GM10248 (cell line): ENCODE measurements at regions of chr15 and their contacts with region 1.

Region 1: DNA sequence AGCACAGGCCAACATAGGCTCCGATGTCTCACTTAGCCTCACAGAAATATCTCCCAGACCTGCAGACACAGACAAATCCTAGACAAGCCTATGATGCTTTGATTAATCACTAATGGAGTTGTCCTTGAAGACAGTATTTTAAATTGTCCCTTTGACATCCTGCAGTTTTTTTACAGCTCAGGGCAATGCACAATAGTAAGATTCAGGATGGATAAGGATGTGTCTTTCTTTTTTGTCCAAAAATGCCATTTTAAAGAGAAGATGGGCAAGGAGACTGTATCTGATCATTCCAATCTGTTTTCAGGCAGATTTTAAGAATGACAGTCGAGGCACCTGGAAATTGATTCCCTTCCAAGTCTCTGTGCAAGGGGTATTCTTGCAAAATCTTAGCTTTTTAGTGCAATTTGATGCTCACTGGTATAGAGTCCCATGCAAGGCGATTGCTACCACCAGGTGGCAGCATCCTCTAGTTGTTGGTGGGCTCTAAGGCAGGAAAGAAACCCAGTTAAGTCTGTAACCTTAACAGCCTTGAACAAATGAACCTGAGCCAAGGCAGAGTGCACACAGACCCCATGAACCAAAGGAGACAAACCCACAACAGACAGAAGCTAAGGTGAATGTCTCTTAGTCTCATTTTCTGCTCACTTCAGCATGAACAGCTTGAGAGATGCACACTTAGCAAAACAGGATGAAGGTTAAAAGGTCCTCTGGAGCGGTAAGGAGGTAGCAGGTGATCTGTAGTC is 51.2 kb upstream of the MINAR1 start:
- DNase-seq: peak; percentile 72
- CTCF ChIP-seq: peak; percentile 86

Region 2: DNA sequence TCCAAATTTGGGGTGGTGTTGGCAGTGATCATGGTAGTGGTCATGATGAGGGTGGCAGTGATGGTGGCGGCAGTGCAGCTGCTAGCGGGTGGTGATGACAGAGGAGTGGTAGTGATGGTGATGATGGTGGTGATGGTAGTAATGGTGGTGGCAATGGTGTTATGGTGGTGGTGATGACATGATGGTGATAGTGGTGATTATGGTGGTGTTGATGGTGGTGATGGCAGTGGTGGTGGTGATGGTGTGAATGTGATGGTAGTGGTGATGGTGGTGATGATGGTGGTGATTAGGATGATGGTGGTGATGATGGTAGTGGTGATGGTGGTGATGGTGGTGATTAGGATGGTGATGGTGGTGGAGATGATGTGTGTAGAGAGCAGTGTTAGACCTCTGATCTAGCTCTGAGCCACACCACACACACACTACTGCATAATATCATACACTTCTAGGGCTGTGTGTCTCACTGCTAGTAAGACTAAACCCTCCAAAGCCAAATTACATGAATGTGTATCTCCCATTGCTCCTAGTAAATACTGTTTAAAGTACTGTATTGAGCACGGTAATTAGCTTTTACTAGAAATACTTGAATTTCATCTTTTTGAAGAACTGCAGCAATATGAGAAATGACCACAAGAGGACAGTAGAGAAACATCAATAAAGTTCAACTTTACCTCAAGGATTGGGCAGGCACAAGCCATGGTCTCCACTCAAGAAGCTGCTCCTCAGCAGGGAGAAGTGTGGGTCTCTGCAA is 41.2 kb before region 1 on chr15:
- CTCF ChIA-PET with region 1: interaction called, 22 read pairs
- POLR2A ChIA-PET with region 1: no interaction called
- DNase-seq: peak; percentile 40
- CTCF ChIP-seq: peak; percentile 45

Region 3: DNA sequence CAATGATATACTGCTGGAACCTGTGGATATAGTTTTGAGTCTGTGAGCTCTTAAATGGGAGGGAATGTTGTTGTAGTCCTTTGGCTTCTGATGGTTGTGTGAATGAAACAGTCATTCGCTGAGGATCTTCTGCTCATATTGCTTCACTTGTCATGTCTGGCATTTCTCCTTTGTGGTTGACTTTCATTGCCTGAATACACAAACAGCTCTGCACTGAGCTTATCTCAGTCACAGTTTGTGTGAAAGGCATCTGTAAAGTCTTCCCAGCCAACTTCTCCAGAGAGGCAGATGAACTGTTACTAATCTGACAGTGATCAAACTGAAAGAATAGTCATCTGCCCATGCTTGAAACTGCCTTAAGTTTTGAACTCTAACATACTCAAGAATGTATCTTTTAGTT is 10.2 kb before region 1 on chr15:
- CTCF ChIA-PET with region 1: interaction called, 78 read pairs
- POLR2A ChIA-PET with region 1: no interaction called
- DNase-seq: no peak
- CTCF ChIP-seq: no peak

Region 4: GRCh38 chr15:79403501-79403900 is 22.6 kb after region 1 on chr15:
- CTCF ChIA-PET with region 1: interaction called, 19 read pairs
- POLR2A ChIA-PET with region 1: no interaction called
- DNase-seq: no peak
- CTCF ChIP-seq: no peak

Region 5: GRCh38 chr15:79596051-79596507 is 215.2 kb after region 1 on chr15:
- CTCF ChIA-PET with region 1: interaction called, 162 read pairs
- POLR2A ChIA-PET with region 1: no interaction called
- DNase-seq: peak; percentile 86
- CTCF ChIP-seq: peak; percentile 89

Region 6: GRCh38 chr15:80173022-80173759 is 792.3 kb after region 1 on chr15:
- CTCF ChIA-PET with region 1: interaction called, 16 read pairs
- POLR2A ChIA-PET with region 1: no interaction called
- DNase-seq: peak; percentile 81
- CTCF ChIP-seq: peak; percentile 90